A549 (cell line): ENCODE measurements at regions of chr17 and their contacts with region 1.

Region 1: DNA sequence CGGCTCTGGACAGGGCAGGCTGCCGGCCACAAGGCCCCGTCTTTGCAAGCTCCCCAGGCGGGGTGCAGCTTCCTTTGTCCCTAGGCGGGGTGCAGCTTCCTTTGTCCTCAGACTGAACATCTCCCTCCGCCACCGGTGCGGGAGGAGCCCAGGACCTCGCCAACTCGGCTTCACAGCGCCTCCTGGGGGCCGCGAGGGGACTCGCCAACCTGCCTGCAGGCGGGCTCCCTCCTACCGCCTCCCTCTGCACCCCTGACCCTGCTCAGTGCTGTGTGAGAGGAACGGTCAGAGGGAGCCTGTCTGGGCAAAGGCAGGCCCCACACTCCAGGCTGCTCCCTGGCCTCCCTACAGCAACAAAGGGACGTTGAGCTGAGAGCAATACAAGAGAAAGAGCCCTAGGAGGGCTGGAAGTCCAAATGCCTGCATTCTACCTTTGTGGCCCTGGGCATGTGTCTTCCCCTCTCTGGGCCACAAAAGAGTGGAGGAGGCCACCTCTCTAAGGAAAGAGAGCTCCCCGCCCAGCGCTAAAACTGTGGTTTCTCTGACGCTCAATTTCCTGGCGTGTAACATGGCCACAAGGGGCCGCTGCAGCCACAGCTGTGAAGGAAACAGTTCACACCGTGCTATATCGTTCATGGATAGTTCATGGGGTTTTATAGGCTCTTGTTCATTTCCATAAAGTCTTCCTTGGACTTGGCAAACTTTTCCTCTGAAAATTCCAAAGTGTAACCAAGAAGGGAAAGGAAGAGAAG is 20.9 kb upstream of the KRT19 start:
- DNase-seq: peak; percentile 94 to 96
- ATAC-seq: peak; percentile 79 to 91
- H3K4me3 ChIP-seq: peak overlapping the region; percentile 33
- H3K27ac ChIP-seq: peak overlapping the region; percentile 89 to 96
- H3K4me1 ChIP-seq: peaks cover 40% of the 10 kb centered on the region
- CTCF ChIP-seq: peak; percentile 99
- EP300 ChIP-seq: no peak
- POLR2A ChIP-seq: peak; percentile 16; the same call in 1 of the 2 replicates
- RAD21 ChIP-seq: peak; percentile 93 to 97

Region 2: GRCh38 chr17:40622509-40622928 is 926.5 kb before region 1 on chr17:
- CTCF ChIA-PET with region 1: interaction called, 10 read pairs
- POLR2A ChIA-PET with region 1: interaction called, 3 read pairs
- DNase-seq: no peak
- ATAC-seq: no peak
- H3K4me3 ChIP-seq: no peak overlapping the region
- H3K27ac ChIP-seq: no peak overlapping the region
- H3K4me1 ChIP-seq: 0 out of 3 replicates have a peak, but pooled peaks cover 3% of the 10 kb centered on the region
- CTCF ChIP-seq: no peak
- EP300 ChIP-seq: no peak
- POLR2A ChIP-seq: no peak
- RAD21 ChIP-seq: no peak

Region 3: DNA sequence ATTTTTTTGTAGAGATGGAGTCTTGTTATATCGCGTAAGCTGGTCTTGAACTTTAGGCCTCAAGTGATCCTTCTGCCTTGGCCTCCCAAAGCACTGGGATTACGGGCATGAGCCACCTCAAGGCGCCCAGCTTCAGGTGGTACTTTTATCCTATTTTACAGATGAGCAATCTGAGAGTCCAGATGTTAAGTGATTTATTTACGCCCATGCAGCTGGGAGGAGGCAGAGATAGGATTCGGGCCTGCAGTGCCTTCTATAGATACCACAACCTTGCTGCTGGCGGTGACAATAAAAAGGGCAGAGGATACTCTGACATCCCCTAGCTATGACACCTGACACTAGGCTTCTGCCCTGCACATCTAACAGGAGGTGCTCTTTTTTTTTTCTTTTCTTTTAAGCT is 677.7 kb before region 1 on chr17:
- CTCF ChIA-PET with region 1: interaction called, 10 read pairs
- POLR2A ChIA-PET with region 1: no interaction called
- DNase-seq: no peak
- ATAC-seq: no peak
- H3K4me3 ChIP-seq: no peak overlapping the region
- H3K27ac ChIP-seq: no peak overlapping the region
- H3K4me1 ChIP-seq: no peaks in the 10 kb centered on the region
- CTCF ChIP-seq: no peak
- EP300 ChIP-seq: no peak
- POLR2A ChIP-seq: no peak
- RAD21 ChIP-seq: no peak

Region 4: GRCh38 chr17:41322094-41322902 is 226.7 kb before region 1 on chr17:
- CTCF ChIA-PET with region 1: interaction called, 30 read pairs
- POLR2A ChIA-PET with region 1: no interaction called
- DNase-seq: peak; percentile 46 to 68
- ATAC-seq: peak; percentile 67 to 79; a peak in 5 of 6 replicates
- H3K4me3 ChIP-seq: no peak overlapping the region
- H3K27ac ChIP-seq: 0 out of 6 replicates have a peak overlapping the region, but pooled peaks of 1 of the 2 experiments have one; percentile 43
- H3K4me1 ChIP-seq: no peaks in the 10 kb centered on the region
- CTCF ChIP-seq: peak; percentile 89
- EP300 ChIP-seq: no peak
- POLR2A ChIP-seq: no peak
- RAD21 ChIP-seq: peak; percentile 78 to 79

Region 5: GRCh38 chr17:41442739-41443138 is 106.3 kb before region 1 on chr17:
- CTCF ChIA-PET with region 1: interaction called, 15 read pairs
- POLR2A ChIA-PET with region 1: no interaction called
- DNase-seq: no peak
- ATAC-seq: no peak
- H3K4me3 ChIP-seq: no peak overlapping the region
- H3K27ac ChIP-seq: no peak overlapping the region
- H3K4me1 ChIP-seq: no peaks in the 10 kb centered on the region
- CTCF ChIP-seq: no peak
- EP300 ChIP-seq: no peak
- POLR2A ChIP-seq: no peak
- RAD21 ChIP-seq: no peak

Region 6: GRCh38 chr17:41559548-41559947 is 10.5 kb after region 1 on chr17:
- CTCF ChIA-PET with region 1: interaction called, 353 read pairs
- POLR2A ChIA-PET with region 1: interaction called, 3 read pairs
- DNase-seq: no peak
- ATAC-seq: no peak
- H3K4me3 ChIP-seq: no peak overlapping the region
- H3K27ac ChIP-seq: no peak overlapping the region
- H3K4me1 ChIP-seq: peaks cover 7% of the 10 kb centered on the region
- CTCF ChIP-seq: no peak
- EP300 ChIP-seq: no peak
- POLR2A ChIP-seq: no peak
- RAD21 ChIP-seq: no peak

Region 7: GRCh38 chr17:41648411-41649195 is 99.6 kb after region 1 on chr17:
- CTCF ChIA-PET with region 1: interaction called, 533 read pairs
- POLR2A ChIA-PET with region 1: interaction called, 21 read pairs
- DNase-seq: peak; percentile 92 to 93
- ATAC-seq: peak; percentile 84 to 94
- H3K4me3 ChIP-seq: peak overlapping the region; percentile 48
- H3K27ac ChIP-seq: peak overlapping the region; percentile 85 to 89
- H3K4me1 ChIP-seq: peaks cover 40% of the 10 kb centered on the region
- CTCF ChIP-seq: peak; percentile 93
- EP300 ChIP-seq: no peak
- POLR2A ChIP-seq: peak; percentile 38
- RAD21 ChIP-seq: peak; percentile 66 to 69

Region 8: DNA sequence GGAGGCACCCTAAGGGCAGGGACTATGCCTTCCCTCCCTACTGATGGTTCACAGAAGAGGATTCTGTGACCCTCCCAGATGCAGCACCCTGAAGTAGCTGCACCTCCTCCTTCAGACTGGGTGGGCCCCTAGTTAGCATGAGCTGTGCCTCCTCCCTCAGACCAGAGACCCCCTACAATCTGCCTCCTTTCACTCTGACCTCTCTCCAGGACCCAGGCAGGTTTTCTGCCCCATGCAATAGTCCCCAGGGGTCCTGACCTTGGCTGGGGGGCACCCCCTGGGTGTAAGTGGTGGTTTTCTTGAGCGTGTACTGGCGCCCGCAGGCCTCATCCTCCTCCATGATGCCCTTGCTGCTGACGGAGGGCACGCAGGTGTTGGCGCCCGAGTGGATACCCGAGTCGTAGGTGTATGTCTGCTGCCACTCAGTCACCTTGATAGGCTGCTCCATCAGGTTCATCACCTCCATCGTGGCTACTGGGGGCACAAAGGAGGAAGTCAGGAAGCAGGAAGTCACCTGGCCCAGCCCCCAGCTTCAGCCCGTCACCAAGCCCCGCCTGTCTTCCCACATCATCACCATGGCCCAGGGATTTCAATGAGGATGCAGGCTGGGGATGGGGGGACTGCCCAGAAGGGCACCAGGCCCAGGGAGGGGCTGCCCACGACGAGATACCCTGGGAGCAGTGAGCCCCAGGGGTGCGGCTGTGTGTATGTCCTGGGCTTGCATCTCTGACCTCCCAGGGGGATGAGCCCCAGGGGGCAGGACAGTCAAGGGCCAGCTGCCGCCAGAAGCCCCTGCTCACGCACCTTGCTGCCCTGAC is 222.6 kb after region 1 on chr17:
- CTCF ChIA-PET with region 1: no interaction called
- POLR2A ChIA-PET with region 1: no interaction called
- DNase-seq: no peak
- ATAC-seq: no peak
- H3K4me3 ChIP-seq: no peak overlapping the region
- H3K27ac ChIP-seq: peak overlapping the region; percentile 89 to 93; a peak in 5 of 6 replicates
- H3K4me1 ChIP-seq: peaks cover 51% of the 10 kb centered on the region
- CTCF ChIP-seq: no peak
- EP300 ChIP-seq: no peak
- POLR2A ChIP-seq: no peak
- RAD21 ChIP-seq: no peak